ENCODE measurements at regions of chr19 and their contacts with region 1.

Region 1: DNA sequence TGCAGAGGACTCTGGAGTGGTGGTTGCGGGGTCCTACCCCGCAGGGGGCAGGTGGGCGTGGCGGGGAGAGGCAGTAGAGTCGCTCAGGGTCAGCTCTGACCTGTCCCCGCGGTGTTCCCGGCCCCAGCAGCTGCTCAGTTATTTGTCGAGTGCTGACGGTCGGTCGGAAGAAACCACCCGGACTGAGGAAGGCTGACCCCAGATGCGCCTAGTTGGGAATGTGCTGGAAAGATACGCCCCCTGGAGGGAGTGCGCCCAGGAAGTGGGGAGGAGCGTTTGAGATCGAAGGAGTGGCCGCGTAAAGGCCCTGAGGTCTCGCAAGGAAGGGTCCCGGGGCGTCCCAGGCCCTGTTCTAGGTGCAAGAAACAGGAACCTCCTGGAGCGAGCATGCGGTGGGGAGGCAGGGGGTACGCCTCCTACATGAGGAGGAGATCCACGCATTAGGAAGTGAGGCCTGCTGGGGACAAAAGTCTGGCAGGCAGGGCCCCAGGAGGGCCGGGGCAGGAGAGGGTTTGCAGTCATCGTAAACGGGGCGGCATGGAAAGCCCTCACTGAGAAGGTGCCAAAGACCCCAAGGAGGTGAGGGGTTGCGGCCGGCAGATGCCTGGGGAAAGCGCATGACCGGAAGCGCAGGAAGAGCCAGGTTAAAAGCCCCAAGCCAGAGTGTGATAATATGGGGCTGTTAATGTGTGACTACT is 9.2 kb downstream of the CCDC8 start:
- DNase-seq: no peak
- H3K4me3 Mint-ChIP-seq: peak overlapping the region; percentile 37
- H3K27ac Mint-ChIP-seq: no peak overlapping the region
- H3K4me1 Mint-ChIP-seq: peaks cover 12% of the 10 kb centered on the region
- H3K27me3 Mint-ChIP-seq: peaks cover 58% of the 10 kb centered on the region

Region 2: GRCh38 chr19:46065553-46065952 is 338.7 kb before region 1 on chr19:
- intact Hi-C with region 1: no loop called
- DNase-seq: no peak
- H3K4me3 Mint-ChIP-seq: no peak overlapping the region
- H3K27ac Mint-ChIP-seq: no peak overlapping the region
- H3K4me1 Mint-ChIP-seq: no peaks in the 10 kb centered on the region
- H3K27me3 Mint-ChIP-seq: peaks cover 53% of the 10 kb centered on the region

Region 3: DNA sequence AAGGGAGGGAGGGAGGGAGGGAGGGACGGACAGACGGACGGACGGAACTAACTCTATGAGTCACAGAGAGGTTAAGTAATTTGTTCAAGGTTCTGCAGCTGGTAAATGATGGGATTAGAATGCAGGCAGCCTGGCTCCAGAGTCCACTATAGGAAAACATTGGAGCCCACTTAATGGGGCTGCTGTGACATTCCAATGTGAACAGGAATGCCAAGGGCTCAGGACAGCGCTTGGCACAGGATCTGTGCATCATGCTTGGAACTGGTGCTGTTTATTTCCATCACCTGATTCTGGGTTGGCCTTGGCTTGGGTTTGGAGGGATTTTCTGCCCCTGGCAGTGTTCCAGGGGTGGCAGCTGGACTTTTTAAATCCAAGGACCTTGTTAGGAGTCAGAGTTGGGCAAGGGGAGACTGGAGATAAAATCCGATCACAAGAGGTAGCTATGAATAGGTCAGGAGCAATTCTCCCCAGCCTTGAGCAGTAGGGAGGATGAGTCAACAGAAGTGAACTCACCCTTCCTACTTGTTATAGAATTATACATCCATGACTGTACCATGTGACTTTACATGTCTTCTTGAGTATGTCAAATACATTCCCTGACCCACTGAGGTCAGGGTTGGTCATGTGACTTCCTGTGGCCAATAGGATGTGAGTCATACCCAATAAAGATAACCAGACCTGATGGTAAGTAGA is 115.2 kb before region 1 on chr19:
- intact Hi-C with region 1: loop called (anchors 10 kb)
- DNase-seq: no peak
- H3K4me3 Mint-ChIP-seq: no peak overlapping the region
- H3K27ac Mint-ChIP-seq: no peak overlapping the region
- H3K4me1 Mint-ChIP-seq: no peaks in the 10 kb centered on the region
- H3K27me3 Mint-ChIP-seq: no peaks in the 10 kb centered on the region

Region 4: GRCh38 chr19:46495787-46496101 is 91.5 kb after region 1 on chr19 and contains the start of gene PNMA8B:
- intact Hi-C with region 1: no loop called
- DNase-seq: peak; percentile 67
- H3K4me3 Mint-ChIP-seq: peak within 1 kb of the TSS; percentile 65
- H3K27ac Mint-ChIP-seq: no peak within 1 kb of the TSS
- H3K4me1 Mint-ChIP-seq: peaks cover 5% of the 10 kb centered on the region
- H3K27me3 Mint-ChIP-seq: peaks cover 63% of the 10 kb centered on the region
- total RNA-seq, gene PNMA8B: not detected in 2 replicates